H1 (cell line): ENCODE measurements at regions of chr13 and their contacts with region 1.

Region 1: GRCh38 chr13:51181786-51182383 is 40.3 kb upstream of the FAM124A start:
- DNase-seq: no peak
- H3K4me3 ChIP-seq: no peak overlapping the region
- H3K27ac ChIP-seq: no peak overlapping the region
- H3K4me1 ChIP-seq: peaks cover 0 to 4% (median 1%) of the 10 kb centered on the region in 4 experiments; a peak in 2 of 7 replicates
- H3K27me3 ChIP-seq: no peaks in the 10 kb centered on the region
- CTCF ChIP-seq: no peak
- EP300 ChIP-seq: no peak
- POLR2A ChIP-seq: peak; percentile 6 to 45
- RAD21 ChIP-seq: no peak

Region 2: GRCh38 chr13:51167393-51168191 is 14.3 kb before region 1 on chr13:
- CTCF ChIA-PET with region 1: no interaction called
- POLR2A ChIA-PET with region 1: interaction called, 494 read pairs
- DNase-seq: peak in 1 of 2 experiments; percentile 23
- H3K4me3 ChIP-seq: no peak overlapping the region
- H3K27ac ChIP-seq: peak overlapping the region; percentile 83; the same call in 1 of the 2 replicates
- H3K4me1 ChIP-seq: peaks cover 6 to 14% (median 12%) of the 10 kb centered on the region in 4 experiments; a peak in 6 of 7 replicates
- H3K27me3 ChIP-seq: no peaks in the 10 kb centered on the region
- CTCF ChIP-seq: no peak
- EP300 ChIP-seq: no peak
- POLR2A ChIP-seq: no peak
- RAD21 ChIP-seq: no peak

Region 3: DNA sequence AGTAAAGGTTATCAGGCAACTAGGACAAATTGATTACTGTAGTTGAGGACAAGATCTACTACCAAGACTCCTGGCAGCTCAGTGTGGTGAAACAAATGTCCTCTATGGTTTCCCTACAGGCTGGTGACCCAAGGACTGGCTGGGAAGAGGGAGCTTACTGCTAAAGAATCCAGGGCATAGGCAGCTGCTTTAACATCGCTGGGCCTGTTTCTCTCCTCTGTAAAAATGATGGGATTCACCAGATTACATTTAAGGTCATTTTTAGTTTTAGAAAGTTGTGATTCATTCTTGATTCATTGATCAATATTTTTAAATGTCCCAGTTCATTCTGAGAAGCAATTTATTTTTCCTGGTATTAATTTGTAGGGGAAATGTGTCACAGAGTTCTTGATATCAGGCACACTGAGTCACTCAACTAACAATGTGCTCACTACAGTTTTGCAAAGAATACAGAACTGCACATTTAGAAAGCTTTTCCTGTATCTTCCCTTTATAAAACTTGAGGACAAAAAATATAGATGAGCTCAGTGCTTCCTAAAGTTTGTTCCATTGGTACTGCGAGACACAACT is 20.7 kb after region 1 on chr13:
- CTCF ChIA-PET with region 1: interaction called, 4 read pairs
- POLR2A ChIA-PET with region 1: interaction called, 87 read pairs
- DNase-seq: no peak
- H3K4me3 ChIP-seq: no peak overlapping the region
- H3K27ac ChIP-seq: no peak overlapping the region
- H3K4me1 ChIP-seq: no peaks in the 10 kb centered on the region
- H3K27me3 ChIP-seq: no peaks in the 10 kb centered on the region; a peak in 1 of 7 replicates
- CTCF ChIP-seq: no peak
- EP300 ChIP-seq: no peak
- POLR2A ChIP-seq: no peak
- RAD21 ChIP-seq: no peak

Region 4: GRCh38 chr13:51222037-51222685 is 40.3 kb after region 1 on chr13 and contains the start of gene FAM124A:
- CTCF ChIA-PET with region 1: no interaction called
- POLR2A ChIA-PET with region 1: interaction called, 160 read pairs
- DNase-seq: peak in 1 of 2 experiments; percentile 80
- H3K4me3 ChIP-seq: peak within 1 kb of the TSS; percentile 80 to 96 (median 89)
- H3K27ac ChIP-seq: peak within 1 kb of the TSS; percentile 24; the same call in 1 of the 2 replicates
- H3K4me1 ChIP-seq: peaks cover 6 to 23% (median 22%) of the 10 kb centered on the region in 4 experiments
- H3K27me3 ChIP-seq: no peaks in the 10 kb centered on the region
- CTCF ChIP-seq: peak; percentile 10 to 71 (median 46); a peak in 3 of 4 replicates
- EP300 ChIP-seq: no peak
- POLR2A ChIP-seq: peak in 1 of 2 experiments; percentile 42; a peak in 2 of 3 replicates
- RAD21 ChIP-seq: peak in 1 of 2 experiments; percentile 43; a peak in 2 of 4 replicates
- total RNA-seq, gene FAM124A: 47.1 and 49.9 TPM in 2 replicates

Region 5: DNA sequence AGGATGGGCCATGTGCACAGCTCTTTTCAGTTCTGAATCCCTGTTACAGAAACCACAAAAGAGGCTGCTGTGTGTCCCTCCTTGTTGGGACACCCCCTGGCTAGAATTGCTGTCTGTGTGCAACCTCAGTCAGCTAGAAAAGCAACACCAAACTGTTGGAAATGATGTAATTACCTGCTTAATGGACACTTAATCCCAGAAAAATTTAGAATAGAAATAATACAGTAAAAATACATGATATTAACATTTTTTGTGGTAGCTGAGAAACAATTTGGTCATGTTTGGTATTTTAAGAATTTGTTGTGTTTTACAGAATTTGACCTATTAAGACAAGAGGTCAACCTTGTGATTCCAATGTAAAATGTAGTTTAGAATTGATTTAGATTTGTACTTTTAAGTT is 87.2 kb after region 1 on chr13:
- CTCF ChIA-PET with region 1: no interaction called
- POLR2A ChIA-PET with region 1: interaction called, 10 read pairs
- DNase-seq: no peak
- H3K4me3 ChIP-seq: no peak overlapping the region
- H3K27ac ChIP-seq: no peak overlapping the region
- H3K4me1 ChIP-seq: peaks cover 0 to 10% (median 1%) of the 10 kb centered on the region in 4 experiments; a peak in 3 of 7 replicates
- H3K27me3 ChIP-seq: no peaks in the 10 kb centered on the region
- CTCF ChIP-seq: no peak
- EP300 ChIP-seq: no peak
- POLR2A ChIP-seq: no peak
- RAD21 ChIP-seq: no peak

Region 6: DNA sequence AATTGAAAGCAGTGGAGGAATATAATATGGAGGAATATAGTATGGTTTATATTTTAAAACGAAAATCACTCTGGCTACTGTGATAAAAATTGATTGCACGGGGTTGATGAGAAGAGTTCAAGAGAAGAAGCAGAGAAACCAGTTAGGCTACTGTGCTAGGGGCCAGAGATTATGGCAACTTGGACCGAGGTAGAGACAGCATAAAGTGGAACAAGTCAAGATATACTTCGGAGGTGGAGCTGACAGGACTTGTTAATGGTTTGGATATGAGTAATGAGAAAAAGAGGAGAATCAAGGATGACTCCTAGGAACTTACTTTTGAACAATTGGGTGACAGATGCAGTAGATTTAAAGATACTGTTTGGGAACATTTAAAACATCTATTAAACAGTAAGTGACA is 395.8 kb after region 1 on chr13:
- CTCF ChIA-PET with region 1: no interaction called
- POLR2A ChIA-PET with region 1: no interaction called
- DNase-seq: no peak
- H3K4me3 ChIP-seq: no peak overlapping the region
- H3K27ac ChIP-seq: no peak overlapping the region
- H3K4me1 ChIP-seq: no peaks in the 10 kb centered on the region
- H3K27me3 ChIP-seq: no peaks in the 10 kb centered on the region
- CTCF ChIP-seq: no peak
- EP300 ChIP-seq: no peak
- POLR2A ChIP-seq: no peak
- RAD21 ChIP-seq: no peak